Activated T-helper 2 cell treated with anti-CD3 and anti-CD28 coated beads, Interferon-gamma antibody, Interleukin-2, Interleukin-4, amounts not matched to agents 10 μg/mL and 5 μg/mL and 100 μg/mL, durations not matched to agents 14 hours and 24 hours and 36 hours (primary cell): ENCODE measurements at regions of chr18 and their contacts with region 1.

Region 1: GRCh38 chr18:79890674-79891073 is 60.8 kb downstream of the SLC66A2 start:
- DNase-seq: no peak
- H3K4me3 Mint-ChIP-seq: no peak overlapping the region
- H3K27ac Mint-ChIP-seq: peak overlapping the region; percentile 85
- H3K4me1 Mint-ChIP-seq: peaks cover 9% of the 10 kb centered on the region
- H3K27me3 Mint-ChIP-seq: no peaks in the 10 kb centered on the region

Region 2: GRCh38 chr18:79905389-79905911 is 14.8 kb after region 1 on chr18:
- intact Hi-C with region 1: loop called (anchors 1 kb)
- DNase-seq: no peak
- H3K4me3 Mint-ChIP-seq: no peak overlapping the region
- H3K27ac Mint-ChIP-seq: peak overlapping the region; percentile 90
- H3K4me1 Mint-ChIP-seq: peaks cover 18% of the 10 kb centered on the region
- H3K27me3 Mint-ChIP-seq: no peaks in the 10 kb centered on the region

Region 3: DNA sequence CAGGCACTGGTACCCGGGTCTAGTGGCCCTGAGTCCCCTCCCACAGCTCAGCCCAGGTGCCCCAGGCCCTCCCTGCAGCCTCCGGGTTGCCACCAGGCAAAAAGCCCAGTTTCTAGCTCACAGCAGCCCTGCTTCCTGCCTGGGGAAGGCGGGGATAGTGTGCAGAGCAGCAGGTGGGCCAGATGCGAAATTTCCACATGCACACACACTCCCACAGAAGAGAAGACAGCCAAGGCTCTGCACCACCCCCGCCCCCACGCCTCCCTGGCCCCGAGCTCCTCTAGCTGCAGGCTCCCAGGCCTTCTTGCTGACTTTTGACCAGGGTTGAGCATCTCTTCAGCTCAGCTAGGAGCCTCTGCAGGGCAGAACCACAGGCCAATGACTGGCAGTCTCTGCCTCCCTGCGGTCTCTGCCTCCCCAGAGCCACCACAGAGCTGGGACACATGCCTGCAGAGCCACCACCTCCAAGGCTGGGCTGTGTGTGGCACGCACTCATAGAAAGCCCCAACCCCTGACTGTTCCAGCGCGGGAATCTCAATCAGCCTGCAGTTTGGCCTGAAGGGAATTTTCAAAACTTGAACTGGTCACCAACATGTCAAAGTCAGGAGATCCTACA is 53.6 kb after region 1 on chr18:
- intact Hi-C with region 1: no loop called
- DNase-seq: no peak
- H3K4me3 Mint-ChIP-seq: peak overlapping the region; percentile 5
- H3K27ac Mint-ChIP-seq: peak overlapping the region; percentile 63
- H3K4me1 Mint-ChIP-seq: peaks cover 24% of the 10 kb centered on the region
- H3K27me3 Mint-ChIP-seq: no peaks in the 10 kb centered on the region

Region 4: GRCh38 chr18:79964330-79965118 is 73.8 kb after region 1 on chr18 and contains the start of gene HSBP1L1:
- intact Hi-C with region 1: loop called (anchors 5 kb)
- DNase-seq: peak; percentile 65
- H3K4me3 Mint-ChIP-seq: peak within 1 kb of the TSS; percentile 76
- H3K27ac Mint-ChIP-seq: peak within 1 kb of the TSS; percentile 75
- H3K4me1 Mint-ChIP-seq: peaks cover 40% of the 10 kb centered on the region
- H3K27me3 Mint-ChIP-seq: no peaks in the 10 kb centered on the region
- total RNA-seq, gene HSBP1L1: 12.0 and 15.5 TPM in 2 replicates

Region 5: DNA sequence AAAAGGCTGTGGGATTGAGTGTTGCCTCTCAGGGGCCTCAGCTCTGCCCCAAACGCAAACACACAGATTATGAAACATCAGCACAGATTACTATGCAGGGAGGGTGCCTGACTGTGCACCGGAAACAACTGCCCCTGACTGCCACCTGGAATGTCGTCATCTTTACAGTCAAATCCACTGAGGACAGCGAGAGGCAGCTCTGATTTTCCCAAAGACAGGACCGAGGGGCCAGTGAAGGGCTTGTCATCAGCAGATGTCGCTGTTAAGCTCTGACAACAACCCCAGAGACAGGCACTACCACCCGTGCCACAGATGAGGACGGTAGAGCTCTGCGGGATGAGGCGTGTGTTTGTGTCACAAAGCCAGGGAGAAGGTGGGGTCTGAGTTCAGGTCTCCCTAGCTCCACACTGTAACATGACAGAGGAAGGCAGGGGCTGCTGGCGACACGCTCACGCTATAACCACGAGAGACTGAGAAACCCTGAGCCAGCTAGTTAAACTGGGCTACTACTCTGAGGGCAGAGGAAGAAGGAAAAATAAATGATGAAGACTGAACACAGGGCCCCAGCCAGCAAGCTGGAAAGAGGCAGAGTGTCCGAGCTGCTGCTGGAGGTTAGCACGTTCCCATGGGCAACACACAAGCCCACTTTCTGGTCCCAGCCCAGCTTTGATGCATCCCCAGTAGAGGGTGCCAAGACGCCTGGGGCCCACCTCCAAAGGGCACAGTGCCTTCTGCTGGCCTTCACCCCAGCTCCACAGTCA is 309.7 kb after region 1 on chr18:
- intact Hi-C with region 1: loop called (anchors 2 kb)
- DNase-seq: no peak
- H3K4me3 Mint-ChIP-seq: no peak overlapping the region
- H3K27ac Mint-ChIP-seq: no peak overlapping the region
- H3K4me1 Mint-ChIP-seq: peaks cover 25% of the 10 kb centered on the region
- H3K27me3 Mint-ChIP-seq: peaks cover 46% of the 10 kb centered on the region